ENCODE measurements at regions of chr7 and their contacts with region 1.

Region 1: DNA sequence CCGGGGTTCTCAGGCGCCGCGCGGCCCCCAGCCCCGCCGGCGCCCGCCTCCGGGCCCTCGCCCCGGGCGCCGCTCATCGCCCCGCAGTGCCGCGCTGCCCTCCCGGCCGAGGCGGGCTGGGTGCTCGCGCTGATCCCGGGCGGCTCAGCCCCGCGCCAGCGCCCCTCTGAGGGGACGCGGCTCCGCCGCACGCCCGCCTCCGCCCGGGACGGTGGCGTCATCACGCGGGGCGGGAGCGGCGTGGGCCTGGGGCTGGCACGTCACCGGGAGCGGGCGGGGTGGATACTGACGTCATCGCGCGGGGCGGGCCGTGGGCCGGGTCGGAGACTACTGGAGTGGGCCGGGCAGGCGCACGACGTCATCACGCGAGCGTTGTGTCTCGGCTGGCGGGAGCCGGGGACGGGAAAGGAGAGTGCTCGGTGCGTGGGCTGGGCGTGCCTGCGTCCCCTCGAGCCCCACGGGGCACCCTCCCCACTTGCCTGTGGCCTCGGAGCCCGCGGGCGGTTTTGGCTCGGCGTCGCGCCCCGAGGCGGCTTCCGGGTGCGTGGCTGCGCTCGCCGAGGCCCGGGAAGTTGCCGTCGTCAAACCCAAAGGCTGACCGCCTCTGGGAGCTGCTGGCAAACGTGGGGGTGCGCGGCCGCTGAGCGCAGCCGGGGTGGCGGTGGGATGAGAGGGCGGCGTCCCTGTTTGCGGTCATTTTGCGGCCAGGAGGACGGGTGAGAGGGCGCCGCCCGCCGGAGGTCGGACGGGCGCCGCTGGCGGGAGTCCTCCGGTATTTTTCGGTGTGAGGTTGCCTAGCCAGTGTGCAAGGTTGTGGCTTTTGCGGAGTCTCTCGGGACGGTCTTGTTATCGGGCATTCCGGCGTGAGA is at the start of gene ESYT2:
- DNase-seq: peak; percentile 98
- H3K4me3 Mint-ChIP-seq: peak within 1 kb of the TSS; percentile 93
- H3K27ac Mint-ChIP-seq: peak within 1 kb of the TSS; percentile 91
- H3K4me1 Mint-ChIP-seq: peaks cover 38% of the 10 kb centered on the region
- H3K27me3 Mint-ChIP-seq: peaks cover 11% of the 10 kb centered on the region
- total RNA-seq, gene ESYT2: 128 to 133 TPM

Region 2: DNA sequence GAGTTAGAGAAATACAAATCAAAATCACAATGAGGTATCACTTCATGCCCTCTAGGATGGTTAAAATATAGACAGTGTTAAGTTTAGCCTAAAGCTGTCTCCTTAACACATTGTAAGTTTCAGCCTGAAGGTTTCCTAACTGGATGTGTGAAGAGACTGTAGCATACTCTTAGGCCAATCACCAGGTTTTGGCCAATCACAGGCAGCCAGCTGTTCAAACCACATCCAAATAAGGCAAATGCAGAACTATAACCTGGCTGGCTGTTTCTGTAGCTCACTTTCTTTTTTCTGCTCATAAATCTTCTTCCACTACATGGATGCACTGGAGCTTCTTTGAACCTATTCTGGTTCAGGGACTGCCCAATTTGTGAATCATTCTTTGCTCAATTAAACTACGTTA is 20.0 kb before region 1 on chr7:
- CTCF ChIA-PET with region 1: interaction called, 7 read pairs
- POLR2A ChIA-PET with region 1: interaction called, 134 read pairs
- DNase-seq: no peak
- H3K4me3 Mint-ChIP-seq: peak overlapping the region; percentile 3
- H3K27ac Mint-ChIP-seq: peak overlapping the region; percentile 65
- H3K4me1 Mint-ChIP-seq: peaks cover 63% of the 10 kb centered on the region
- H3K27me3 Mint-ChIP-seq: no peaks in the 10 kb centered on the region

Region 3: DNA sequence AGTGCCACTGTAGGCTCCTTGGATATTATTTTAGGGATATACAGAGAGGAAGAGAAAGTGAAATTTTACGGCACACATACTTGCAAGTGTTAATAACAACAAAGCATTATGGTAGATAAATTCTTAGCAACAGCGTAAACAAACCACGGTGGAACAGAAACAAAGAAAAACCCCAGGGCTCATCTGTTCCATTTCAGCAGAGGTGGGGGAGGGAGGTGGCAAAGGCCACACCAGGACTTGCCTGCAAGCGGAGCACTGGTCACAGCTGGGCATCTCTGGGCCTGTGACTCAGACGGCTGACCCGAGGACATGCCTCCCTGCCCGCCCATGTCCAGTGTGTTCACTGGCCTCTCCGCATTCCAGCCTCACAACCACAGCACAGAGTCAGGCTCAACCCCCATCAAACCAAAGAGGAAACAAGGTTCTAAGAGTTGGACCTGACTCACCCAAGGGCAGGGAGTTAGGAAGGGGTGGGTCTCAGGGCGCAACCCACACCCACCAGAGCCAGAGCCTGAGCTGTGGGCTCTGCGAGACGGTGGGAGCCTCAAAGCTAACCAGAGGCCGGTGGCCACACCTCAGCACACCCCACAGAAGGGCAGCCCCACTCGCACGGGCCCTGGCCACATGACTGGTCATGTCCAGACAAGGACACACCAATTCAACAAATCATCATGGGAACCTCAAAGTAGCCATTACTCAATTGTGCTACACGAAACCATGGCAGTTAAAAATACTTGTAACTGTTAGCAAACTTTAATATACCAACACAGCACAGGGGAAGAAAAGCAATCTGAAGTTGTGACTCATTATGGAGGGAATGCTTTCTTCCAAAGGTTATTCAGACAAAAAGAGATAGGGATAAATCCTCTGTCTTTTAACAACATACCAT is 11.0 kb before region 1 on chr7:
- CTCF ChIA-PET with region 1: interaction called, 5 read pairs
- POLR2A ChIA-PET with region 1: interaction called, 134 read pairs
- DNase-seq: peak; percentile 83
- H3K4me3 Mint-ChIP-seq: peak overlapping the region; percentile 87
- H3K27ac Mint-ChIP-seq: peak overlapping the region; percentile 92
- H3K4me1 Mint-ChIP-seq: peaks cover 91% of the 10 kb centered on the region
- H3K27me3 Mint-ChIP-seq: no peaks in the 10 kb centered on the region

Region 4: DNA sequence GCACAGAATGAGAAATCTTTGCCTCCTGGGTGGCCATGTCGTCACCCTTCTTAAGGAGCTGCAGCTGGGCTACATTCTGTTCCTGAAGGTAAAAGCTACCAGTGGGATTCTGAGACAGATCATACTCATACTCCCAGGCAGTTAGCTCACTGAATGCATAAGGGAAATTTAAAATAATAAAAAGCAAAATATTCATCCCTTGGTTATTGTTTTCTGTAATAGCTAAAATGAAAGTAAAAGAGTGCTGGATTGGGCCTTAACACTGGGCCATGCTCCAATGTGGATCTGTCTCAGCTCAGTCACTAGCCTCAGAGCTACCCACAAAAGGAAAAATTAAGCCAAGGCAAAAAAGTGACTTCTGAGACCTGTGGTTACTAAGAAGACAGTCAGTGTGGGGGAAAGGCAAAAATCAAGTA is 17.9 kb after region 1 on chr7:
- CTCF ChIA-PET with region 1: no interaction called
- POLR2A ChIA-PET with region 1: interaction called, 24 read pairs
- DNase-seq: peak; percentile 17
- H3K4me3 Mint-ChIP-seq: peak overlapping the region; percentile 73
- H3K27ac Mint-ChIP-seq: peak overlapping the region; percentile 88
- H3K4me1 Mint-ChIP-seq: peaks cover 26% of the 10 kb centered on the region
- H3K27me3 Mint-ChIP-seq: peaks cover 3% of the 10 kb centered on the region

Region 5: DNA sequence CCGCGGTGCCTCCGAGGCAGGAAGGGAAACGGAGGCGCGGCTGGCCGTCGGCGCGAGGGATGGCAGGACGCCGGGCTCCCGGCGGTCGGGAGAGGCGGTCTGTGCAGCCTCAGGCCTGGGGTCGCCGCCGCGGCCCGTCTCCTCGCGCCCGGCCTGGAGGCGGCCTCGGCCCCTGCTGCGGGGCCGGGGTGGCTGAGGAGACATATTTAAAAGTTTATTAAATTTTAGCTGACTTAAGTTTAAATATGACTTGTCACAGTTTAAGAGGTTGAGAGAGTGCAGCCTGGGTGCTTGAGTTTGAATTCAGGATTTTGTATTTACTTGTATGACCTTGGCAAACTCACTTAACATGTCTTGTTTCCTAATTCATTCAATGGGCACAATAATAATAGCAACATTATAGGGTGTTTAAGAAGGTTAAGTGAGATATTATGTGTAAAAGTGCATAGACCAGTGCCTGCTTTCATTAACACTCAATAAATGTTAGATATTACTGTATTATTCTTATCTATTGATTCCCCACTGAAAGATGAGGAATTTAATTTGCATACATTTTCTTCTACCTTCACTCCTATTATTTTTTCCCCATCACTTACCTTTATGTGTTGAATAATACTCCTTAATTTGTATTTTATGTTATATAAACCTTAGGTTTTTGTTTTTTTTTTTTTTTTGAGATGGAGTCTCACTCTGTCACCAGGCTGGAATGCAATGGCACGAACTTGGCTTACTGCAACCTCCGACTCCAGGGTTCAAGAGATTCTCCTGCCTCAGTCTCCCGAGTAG is 27.5 kb after region 1 on chr7:
- CTCF ChIA-PET with region 1: interaction called, 4 read pairs
- POLR2A ChIA-PET with region 1: interaction called, 10 read pairs
- DNase-seq: no peak
- H3K4me3 Mint-ChIP-seq: peak overlapping the region; percentile 98
- H3K27ac Mint-ChIP-seq: no peak overlapping the region
- H3K4me1 Mint-ChIP-seq: peaks cover 40% of the 10 kb centered on the region
- H3K27me3 Mint-ChIP-seq: no peaks in the 10 kb centered on the region

Region 6: GRCh38 chr7:158863611-158864506 is 34.3 kb after region 1 on chr7:
- CTCF ChIA-PET with region 1: interaction called, 5 read pairs
- POLR2A ChIA-PET with region 1: interaction called, 18 read pairs
- DNase-seq: peak; percentile 60
- H3K4me3 Mint-ChIP-seq: peak overlapping the region; percentile 76
- H3K27ac Mint-ChIP-seq: peak overlapping the region; percentile 81
- H3K4me1 Mint-ChIP-seq: peaks cover 49% of the 10 kb centered on the region
- H3K27me3 Mint-ChIP-seq: no peaks in the 10 kb centered on the region

Measured in activated CD4-positive, alpha-beta memory T cell treated with anti-CD3 and anti-CD28 coated beads, Interleukin-2, amount 10 ng/mL, durations not matched to agents 7 days and 5 days (primary cell).